Adrenal gland (tissue), 19 donors: ENCODE measurements at regions of chr10 and their contacts with region 1.

Region 1: GRCh38 chr10:88835096-88835909 is 16.3 kb downstream of the ANKRD22 start:
- DNase-seq: peak; percentile 81 to 93 (median 87)
- H3K4me3 ChIP-seq: no peak overlapping the region
- H3K27ac ChIP-seq: no peak overlapping the region
- H3K4me1 ChIP-seq: peaks cover 0 to 16% of the 10 kb centered on the region in 2 donors
- H3K27me3 ChIP-seq: no peaks in the 10 kb centered on the region
- CTCF ChIP-seq: peak; percentile 83 to 97 (median 94)
- POLR2A ChIP-seq: no peak

Region 2: GRCh38 chr10:88702848-88703597 is 132.3 kb before region 1 on chr10:
- intact Hi-C with region 1: no loop called
- DNase-seq: no peak
- H3K4me3 ChIP-seq: no peak overlapping the region
- H3K27ac ChIP-seq: no peak overlapping the region
- H3K4me1 ChIP-seq: no peaks in the 10 kb centered on the region
- H3K27me3 ChIP-seq: no peaks in the 10 kb centered on the region
- CTCF ChIP-seq: no peak
- POLR2A ChIP-seq: no peak

Region 3: GRCh38 chr10:88932539-88933256 is 97.4 kb after region 1 on chr10:
- intact Hi-C with region 1: loop called (anchors 5 kb)
- DNase-seq: peak; percentile 57 to 92 (median 76)
- H3K4me3 ChIP-seq: no peak overlapping the region
- H3K27ac ChIP-seq: peak overlapping the region in 4 of 5 donors; percentile 1 to 67 (median 27)
- H3K4me1 ChIP-seq: peaks cover 0 to 26% of the 10 kb centered on the region in 2 donors
- H3K27me3 ChIP-seq: no peaks in the 10 kb centered on the region
- CTCF ChIP-seq: peak; percentile 88 to 98 (median 96)
- POLR2A ChIP-seq: no peak